Activated T-helper 2 cell treated with anti-CD3 and anti-CD28 coated beads, Interferon-gamma antibody, Interleukin-2, Interleukin-4, amounts not matched to agents 10 μg/mL and 5 μg/mL and 100 μg/mL, durations not matched to agents 14 hours and 24 hours and 36 hours (primary cell): ENCODE measurements at regions of chr4 and their contacts with region 1.

Region 1: GRCh38 chr4:185395956-185396723 is 416 bp upstream of the LRP2BP start:
- DNase-seq: peak; percentile 97
- H3K4me3 Mint-ChIP-seq: peak overlapping the region; percentile 87
- H3K27ac Mint-ChIP-seq: peak overlapping the region; percentile 92
- H3K4me1 Mint-ChIP-seq: peaks cover 48% of the 10 kb centered on the region
- H3K27me3 Mint-ChIP-seq: no peaks in the 10 kb centered on the region

Region 2: GRCh38 chr4:185142912-185143595 is 253.1 kb before region 1 on chr4 and contains the start of gene SLC25A4:
- intact Hi-C with region 1: loop called (anchors 10 kb)
- DNase-seq: peak; percentile 61
- H3K4me3 Mint-ChIP-seq: peak within 1 kb of the TSS; percentile 83
- H3K27ac Mint-ChIP-seq: no peak within 1 kb of the TSS
- H3K4me1 Mint-ChIP-seq: peaks cover 4% of the 10 kb centered on the region
- H3K27me3 Mint-ChIP-seq: peaks cover 64% of the 10 kb centered on the region
- total RNA-seq, gene SLC25A4: 5.0 and 6.0 TPM in 2 replicates

Region 3: DNA sequence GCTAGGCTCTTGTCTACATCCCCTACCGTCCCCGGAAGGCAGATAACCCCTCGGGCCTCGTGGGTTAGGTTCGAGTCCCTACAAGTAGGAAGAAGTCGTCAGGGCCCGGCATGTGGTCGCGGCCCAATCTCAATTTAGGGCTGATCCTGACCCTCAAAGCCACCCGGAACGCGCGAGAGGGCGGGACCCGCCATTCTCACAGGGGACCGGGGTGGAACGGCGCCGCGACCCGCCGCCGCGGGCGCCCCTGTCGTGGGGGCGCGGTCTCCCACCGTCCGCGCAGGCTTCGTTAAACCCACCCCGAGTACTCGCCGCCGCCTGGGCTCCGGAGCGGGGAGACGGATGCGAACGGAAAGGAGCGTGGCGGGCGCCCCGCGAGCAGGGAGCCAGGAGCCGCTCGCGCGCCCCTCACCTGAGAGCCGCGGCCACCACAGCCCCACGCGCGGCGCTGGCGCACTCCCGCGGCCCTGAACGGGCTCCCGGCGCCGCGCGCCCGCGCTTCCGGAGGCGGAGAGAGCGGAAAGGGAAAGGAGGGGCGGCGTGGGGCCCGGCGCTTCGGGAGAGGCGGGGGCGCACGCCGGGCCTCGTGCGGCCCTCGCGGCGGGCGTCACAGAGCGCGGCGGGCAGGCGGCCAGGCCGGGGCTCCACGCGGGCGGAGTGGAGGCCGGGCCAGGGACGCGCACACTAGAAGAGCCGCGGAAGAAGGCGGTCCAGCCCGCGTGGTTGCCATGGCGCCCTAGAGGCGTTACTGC is 192.5 kb before region 1 on chr4 and contains the start of gene CFAP97:
- intact Hi-C with region 1: loop called (anchors 1 kb)
- DNase-seq: peak; percentile 71
- H3K4me3 Mint-ChIP-seq: peak within 1 kb of the TSS; percentile 98
- H3K27ac Mint-ChIP-seq: peak within 1 kb of the TSS; percentile 99
- H3K4me1 Mint-ChIP-seq: peaks cover 30% of the 10 kb centered on the region
- H3K27me3 Mint-ChIP-seq: peaks cover 5% of the 10 kb centered on the region
- total RNA-seq, gene CFAP97: 44.1 and 46.9 TPM in 2 replicates

Region 4: DNA sequence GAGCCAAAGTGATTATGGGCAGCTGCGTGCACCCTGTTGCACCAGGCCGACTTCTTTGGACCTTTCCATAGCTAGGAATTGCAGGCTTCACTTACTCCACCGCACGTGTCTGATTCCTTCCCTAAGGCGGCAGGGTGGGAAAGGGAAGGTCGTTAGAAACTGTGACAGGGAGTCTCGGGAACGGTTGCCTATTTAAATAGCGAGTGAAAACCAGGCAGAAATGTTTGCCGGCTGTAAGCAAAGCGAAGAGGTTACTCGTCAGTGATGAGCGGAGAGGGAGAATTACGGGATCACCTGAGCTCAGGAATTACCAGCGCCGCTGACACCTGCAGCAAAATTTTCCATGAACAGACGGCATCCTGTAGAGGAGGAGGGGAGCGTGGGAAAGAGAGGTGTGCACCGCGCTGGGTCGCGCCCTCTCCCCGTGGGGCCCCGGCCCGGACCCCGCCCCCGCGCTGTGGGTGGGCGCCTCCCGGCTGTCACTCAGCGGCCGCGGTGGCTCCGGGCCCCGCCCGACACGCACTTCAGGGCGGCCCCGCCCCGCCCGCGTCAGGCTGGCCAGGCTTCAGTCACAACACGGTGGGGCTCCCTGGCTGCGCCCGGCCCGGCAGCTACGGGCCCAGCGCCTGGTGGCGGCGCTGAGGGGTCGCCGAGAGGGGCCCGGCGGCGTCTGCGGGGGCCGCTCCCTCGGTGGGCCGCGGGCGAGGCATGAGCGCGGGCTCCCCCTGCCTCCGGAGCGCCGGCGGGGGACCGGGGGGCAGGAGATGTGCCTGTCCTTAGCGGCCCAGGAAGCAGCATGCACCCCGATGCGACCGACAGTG is 186.9 kb before region 1 on chr4 and contains the start of gene SNX25:
- intact Hi-C with region 1: loop called (anchors 1 kb)
- DNase-seq: peak; percentile 81
- H3K4me3 Mint-ChIP-seq: peak within 1 kb of the TSS; percentile 88
- H3K27ac Mint-ChIP-seq: peak within 1 kb of the TSS; percentile 84
- H3K4me1 Mint-ChIP-seq: peaks cover 34% of the 10 kb centered on the region
- H3K27me3 Mint-ChIP-seq: peaks cover 15% of the 10 kb centered on the region
- total RNA-seq, gene SNX25: 24.1 and 25.0 TPM in 2 replicates

Region 5: DNA sequence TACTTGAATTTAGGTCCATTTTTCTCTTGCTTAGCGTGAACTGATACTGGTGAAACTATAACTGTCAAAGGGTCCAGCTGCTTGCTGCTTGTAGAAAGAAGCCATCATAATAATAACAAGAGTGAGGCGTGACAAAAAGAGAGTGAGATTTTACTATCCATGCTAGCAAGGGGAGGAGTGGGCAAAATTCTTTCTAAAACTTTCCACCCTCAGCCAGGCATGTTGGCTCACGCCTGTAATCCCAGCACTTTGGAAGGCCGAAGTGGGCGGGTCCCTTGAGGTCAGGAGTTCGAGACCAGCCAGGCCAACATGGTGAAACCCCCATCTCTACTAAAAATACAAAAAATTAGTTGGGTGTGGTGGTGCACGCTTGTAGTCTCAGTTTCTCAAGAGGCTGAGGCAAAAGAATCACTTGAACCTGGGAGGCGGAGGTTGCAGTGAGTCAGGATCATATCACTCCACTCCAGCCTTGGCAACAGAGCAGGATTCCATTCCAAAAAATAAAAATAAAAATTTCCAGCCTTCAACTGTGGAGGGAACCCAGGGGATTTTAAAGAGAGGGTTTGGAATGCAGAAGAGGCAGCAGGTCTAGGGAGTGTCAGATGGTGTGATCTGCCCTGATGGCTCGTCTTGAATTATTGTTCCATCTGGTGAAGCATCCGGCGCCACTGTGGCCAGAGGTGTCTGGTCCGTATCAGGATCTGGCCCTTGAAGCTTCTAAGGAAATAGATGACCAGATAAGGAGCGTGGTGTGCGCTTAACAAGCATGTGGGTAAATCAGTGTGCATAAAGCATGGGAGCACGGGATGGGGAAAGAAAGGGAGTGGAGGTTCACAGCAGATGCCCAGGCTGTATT is 52.2 kb before region 1 on chr4:
- intact Hi-C with region 1: loop called (anchors 2 kb)
- DNase-seq: no peak
- H3K4me3 Mint-ChIP-seq: no peak overlapping the region
- H3K27ac Mint-ChIP-seq: peak overlapping the region; percentile 86
- H3K4me1 Mint-ChIP-seq: peaks cover 44% of the 10 kb centered on the region
- H3K27me3 Mint-ChIP-seq: no peaks in the 10 kb centered on the region

Region 6: DNA sequence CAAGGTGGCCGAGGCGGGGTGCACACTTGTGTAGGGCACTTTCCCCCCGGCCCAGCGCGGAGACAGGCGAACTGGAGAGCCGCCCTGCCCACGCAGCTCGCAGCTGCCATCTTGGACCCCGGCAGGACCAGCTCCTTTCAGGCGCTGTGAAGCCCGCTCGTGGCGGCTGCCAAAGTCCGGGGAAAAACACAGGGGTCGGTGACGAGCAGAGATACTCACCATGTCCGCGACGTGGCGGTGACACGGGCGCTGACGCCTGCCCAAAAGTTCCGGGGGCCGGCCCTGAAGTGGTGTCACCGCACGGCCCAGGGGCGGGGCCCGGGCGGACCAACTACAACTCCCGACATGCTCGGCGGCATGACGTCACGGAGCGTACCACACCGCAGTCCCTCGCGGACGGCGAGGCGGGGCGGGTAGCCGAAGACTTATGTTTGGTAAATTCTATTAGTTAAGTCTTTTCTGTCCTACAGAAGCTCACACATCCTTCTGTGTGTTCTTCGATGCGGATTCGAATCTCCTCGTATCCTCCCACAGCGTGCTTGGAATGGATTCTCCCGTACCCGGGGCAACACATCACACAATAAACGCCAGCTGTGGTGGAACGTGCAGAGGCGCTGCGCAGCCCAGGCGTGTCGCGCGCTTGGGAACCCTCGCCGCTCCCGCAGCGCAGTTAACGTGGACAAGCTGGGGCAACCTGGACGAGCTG is 29.7 kb after region 1 on chr4 and contains the start of gene UFSP2:
- intact Hi-C with region 1: loop called (anchors 1 kb)
- DNase-seq: peak; percentile 86
- H3K4me3 Mint-ChIP-seq: peak within 1 kb of the TSS; percentile 90
- H3K27ac Mint-ChIP-seq: peak within 1 kb of the TSS; percentile 86
- H3K4me1 Mint-ChIP-seq: peaks cover 24% of the 10 kb centered on the region
- H3K27me3 Mint-ChIP-seq: peaks cover 3% of the 10 kb centered on the region
- total RNA-seq, gene UFSP2: 26.4 and 34.5 TPM in 2 replicates

Region 7: DNA sequence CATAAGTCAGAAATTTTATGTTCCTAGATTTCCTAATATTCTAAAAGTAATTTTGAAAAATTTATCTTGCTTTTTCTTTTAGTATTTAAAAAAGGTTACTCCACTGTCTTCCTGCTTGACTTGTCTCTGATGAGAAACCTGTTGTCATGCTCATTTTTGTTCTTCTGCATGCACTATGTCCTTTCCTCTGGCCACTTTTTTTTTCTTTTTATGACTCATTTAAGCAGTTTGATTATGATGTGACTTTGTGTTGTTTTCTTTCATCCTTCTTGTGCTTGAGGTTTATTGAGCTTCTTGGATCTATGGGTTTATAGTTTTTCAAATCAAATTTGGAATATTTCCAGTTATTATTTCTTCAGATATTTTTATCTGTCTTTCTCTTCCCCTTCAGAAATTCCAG is 41.7 kb after region 1 on chr4:
- intact Hi-C with region 1: no loop called
- DNase-seq: no peak
- H3K4me3 Mint-ChIP-seq: no peak overlapping the region
- H3K27ac Mint-ChIP-seq: no peak overlapping the region
- H3K4me1 Mint-ChIP-seq: no peaks in the 10 kb centered on the region
- H3K27me3 Mint-ChIP-seq: peaks cover 8% of the 10 kb centered on the region

Region 8: GRCh38 chr4:185471235-185472102 is 75.3 kb after region 1 on chr4 and contains the start of gene CCDC110:
- intact Hi-C with region 1: loop called (anchors 1 kb)
- DNase-seq: peak; percentile 79
- H3K4me3 Mint-ChIP-seq: peak within 1 kb of the TSS; percentile 88
- H3K27ac Mint-ChIP-seq: no peak within 1 kb of the TSS
- H3K4me1 Mint-ChIP-seq: peaks cover 8% of the 10 kb centered on the region
- H3K27me3 Mint-ChIP-seq: peaks cover 44% of the 10 kb centered on the region
- total RNA-seq, gene CCDC110: not detected in 2 replicates

Region 9: DNA sequence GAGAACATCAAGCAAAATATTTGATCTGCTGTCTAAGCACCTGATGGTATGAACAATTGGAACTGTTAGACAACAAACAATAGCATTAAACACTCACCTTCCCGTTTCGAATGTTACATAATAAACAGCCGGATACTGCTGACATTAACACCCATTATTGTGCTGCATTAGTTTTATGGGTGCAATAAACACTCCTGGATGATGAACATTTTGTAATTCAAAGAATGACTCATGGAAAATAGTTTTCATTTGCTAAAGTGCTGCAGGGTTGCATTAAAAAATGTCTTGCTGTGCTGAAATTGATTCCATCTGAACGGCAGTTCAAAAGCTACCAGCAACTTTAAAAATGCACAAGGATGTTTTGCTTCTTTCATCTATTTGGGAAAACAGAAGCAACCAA is 516.6 kb after region 1 on chr4:
- intact Hi-C with region 1: no loop called
- DNase-seq: no peak
- H3K4me3 Mint-ChIP-seq: no peak overlapping the region
- H3K27ac Mint-ChIP-seq: no peak overlapping the region
- H3K4me1 Mint-ChIP-seq: no peaks in the 10 kb centered on the region
- H3K27me3 Mint-ChIP-seq: no peaks in the 10 kb centered on the region